ENCODE measurements at regions of chr16 and their contacts with region 1.

Region 1: GRCh38 chr16:7044331-7044730 is 288.3 kb upstream of the RBFOX1 start:
- DNase-seq: no peak
- H3K4me3 ChIP-seq: no peak overlapping the region
- H3K27ac ChIP-seq: no peak overlapping the region
- H3K4me1 ChIP-seq: no peaks in the 10 kb centered on the region
- H3K27me3 ChIP-seq: no peaks in the 10 kb centered on the region
- CTCF ChIP-seq: no peak
- POLR2A ChIP-seq: no peak

Region 2: GRCh38 chr16:6528217-6528616 is 516.1 kb before region 1 on chr16:
- intact Hi-C with region 1: no loop called
- DNase-seq: no peak
- H3K4me3 ChIP-seq: no peak overlapping the region
- H3K27ac ChIP-seq: no peak overlapping the region
- H3K4me1 ChIP-seq: no peaks in the 10 kb centered on the region
- H3K27me3 ChIP-seq: no peaks in the 10 kb centered on the region
- CTCF ChIP-seq: no peak
- POLR2A ChIP-seq: no peak

Region 3: GRCh38 chr16:7060057-7060456 is 15.7 kb after region 1 on chr16:
- intact Hi-C with region 1: no loop called
- DNase-seq: no peak
- H3K4me3 ChIP-seq: no peak overlapping the region
- H3K27ac ChIP-seq: no peak overlapping the region
- H3K4me1 ChIP-seq: no peaks in the 10 kb centered on the region
- H3K27me3 ChIP-seq: no peaks in the 10 kb centered on the region
- CTCF ChIP-seq: no peak
- POLR2A ChIP-seq: no peak

Region 4: DNA sequence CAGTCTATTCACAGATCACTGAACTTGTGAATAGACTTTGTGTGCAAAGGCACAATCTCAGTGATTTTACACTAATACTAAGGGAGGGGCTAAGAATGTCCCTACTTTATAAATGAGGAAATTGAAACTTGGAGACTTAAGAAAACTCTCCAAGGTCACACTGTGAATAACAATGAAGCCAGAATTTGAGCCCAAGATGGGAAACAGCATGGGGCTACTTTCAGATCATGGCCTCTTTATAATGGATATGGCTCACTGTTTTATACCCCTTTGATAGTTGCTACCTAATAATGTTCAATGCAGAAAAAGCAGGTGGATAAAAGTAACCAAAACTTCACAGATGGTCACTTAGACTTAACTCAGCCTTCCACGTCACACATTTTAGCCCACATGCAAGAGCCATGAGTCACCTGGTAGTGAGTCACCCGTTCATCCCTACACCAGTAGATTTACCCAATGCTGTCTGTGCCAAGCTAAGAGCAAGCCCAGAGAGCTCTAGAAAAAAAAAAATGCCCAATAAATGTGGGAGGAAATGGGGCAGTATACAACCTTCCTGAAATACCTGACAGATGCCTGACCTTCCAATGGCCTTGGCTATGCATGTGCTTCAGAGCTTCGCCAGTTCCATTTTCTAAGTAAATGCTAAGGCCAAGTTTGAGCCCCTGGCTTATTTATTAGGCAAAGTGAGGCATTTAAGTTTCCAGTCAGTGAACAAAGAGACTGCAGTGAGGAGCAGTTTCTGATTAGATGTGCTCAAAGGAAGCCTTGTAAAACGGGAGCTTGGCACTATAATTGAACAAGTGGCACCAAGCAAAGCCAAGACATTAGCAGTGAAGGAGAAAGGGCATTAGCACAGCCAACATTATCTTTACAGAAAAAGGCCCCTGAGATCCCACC is 1326.3 kb after region 1 on chr16:
- intact Hi-C with region 1: loop called (anchors 5 kb)
- DNase-seq: no peak
- H3K4me3 ChIP-seq: no peak overlapping the region
- H3K27ac ChIP-seq: no peak overlapping the region
- H3K4me1 ChIP-seq: no peaks in the 10 kb centered on the region
- H3K27me3 ChIP-seq: no peaks in the 10 kb centered on the region
- CTCF ChIP-seq: no peak
- POLR2A ChIP-seq: no peak